ENCODE measurements at regions of chr3 and their contacts with region 1.

Region 1: GRCh38 chr3:177448987-177449975 is 252.0 kb upstream of the TBL1XR1 start:
- DNase-seq: peak; percentile 19 to 49 (median 23)
- H3K4me3 ChIP-seq: peak overlapping the region in 1 of 2 donors; percentile 6
- H3K4me3 Mint-ChIP-seq: peak overlapping the region; percentile 26 to 84 (median 70)
- H3K27ac ChIP-seq: no peak overlapping the region
- H3K27ac Mint-ChIP-seq: peak overlapping the region; percentile 67 to 93 (median 84)
- H3K4me1 ChIP-seq: peaks cover 23% of the 10 kb centered on the region
- H3K4me1 Mint-ChIP-seq: peaks cover 13 to 26% (median 19%) of the 10 kb centered on the region in 4 donors
- H3K27me3 ChIP-seq: no peaks in the 10 kb centered on the region
- H3K27me3 Mint-ChIP-seq: no peaks in the 10 kb centered on the region

Region 2: DNA sequence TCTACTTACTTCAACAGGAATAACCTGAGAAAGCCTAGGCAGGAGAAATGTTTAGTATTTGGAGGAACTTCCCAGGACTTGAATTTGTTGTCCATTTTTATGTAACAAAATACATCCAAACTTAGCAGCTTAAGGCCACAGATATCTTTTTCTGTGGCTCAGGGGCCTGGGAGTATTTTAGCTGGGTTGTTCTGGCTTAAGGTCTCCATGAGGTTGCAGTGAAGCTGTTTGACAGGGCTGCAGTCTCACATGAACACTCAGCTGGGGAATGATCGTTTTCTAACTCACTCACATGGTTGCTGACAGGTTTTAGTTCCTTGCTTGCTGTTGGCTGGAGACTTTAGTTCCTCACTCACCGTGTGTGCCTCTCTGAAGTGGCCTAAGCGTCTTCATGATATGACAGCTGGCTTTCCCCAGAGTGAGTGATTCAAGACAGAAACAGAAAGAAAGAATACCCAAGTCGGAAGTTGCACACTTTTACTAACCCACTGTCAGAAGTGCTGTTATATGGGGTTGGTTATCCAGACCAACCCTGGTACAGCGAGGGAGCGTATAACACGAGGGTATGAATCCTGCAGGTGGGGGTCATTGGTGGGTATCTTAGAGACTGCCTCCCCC is 22.3 kb before region 1 on chr3:
- CTCF ChIA-PET with region 1: interaction called, 4 read pairs
- POLR2A ChIA-PET with region 1: interaction called, 12 read pairs
- intact Hi-C with region 1: no loop called
- DNase-seq: peak; percentile 46 to 61 (median 57)
- H3K4me3 ChIP-seq: peak overlapping the region; percentile 8 to 10
- H3K4me3 Mint-ChIP-seq: peak overlapping the region; percentile 38 to 90 (median 75)
- H3K27ac ChIP-seq: peak overlapping the region; percentile 46
- H3K27ac Mint-ChIP-seq: peak overlapping the region; percentile 56 to 96 (median 92)
- H3K4me1 ChIP-seq: peaks cover 39% of the 10 kb centered on the region
- H3K4me1 Mint-ChIP-seq: peaks cover 22 to 37% (median 32%) of the 10 kb centered on the region in 4 donors
- H3K27me3 ChIP-seq: no peaks in the 10 kb centered on the region
- H3K27me3 Mint-ChIP-seq: no peaks in the 10 kb centered on the region

Region 3: GRCh38 chr3:177468331-177468730 is 19.1 kb after region 1 on chr3:
- CTCF ChIA-PET with region 1: no interaction called
- POLR2A ChIA-PET with region 1: interaction called, 4 read pairs
- intact Hi-C with region 1: loop called (anchors 2 kb)
- DNase-seq: no peak
- H3K4me3 ChIP-seq: no peak overlapping the region
- H3K4me3 Mint-ChIP-seq: no peak overlapping the region
- H3K27ac ChIP-seq: no peak overlapping the region
- H3K27ac Mint-ChIP-seq: peak overlapping the region in 1 of 7 donors; percentile 71
- H3K4me1 ChIP-seq: peaks cover 3% of the 10 kb centered on the region
- H3K4me1 Mint-ChIP-seq: peaks cover 9 to 13% (median 9%) of the 10 kb centered on the region in 4 donors
- H3K27me3 ChIP-seq: no peaks in the 10 kb centered on the region
- H3K27me3 Mint-ChIP-seq: no peaks in the 10 kb centered on the region